WTC11 (cell line): ENCODE measurements at regions of chr21 and their contacts with region 1.

Region 1: DNA sequence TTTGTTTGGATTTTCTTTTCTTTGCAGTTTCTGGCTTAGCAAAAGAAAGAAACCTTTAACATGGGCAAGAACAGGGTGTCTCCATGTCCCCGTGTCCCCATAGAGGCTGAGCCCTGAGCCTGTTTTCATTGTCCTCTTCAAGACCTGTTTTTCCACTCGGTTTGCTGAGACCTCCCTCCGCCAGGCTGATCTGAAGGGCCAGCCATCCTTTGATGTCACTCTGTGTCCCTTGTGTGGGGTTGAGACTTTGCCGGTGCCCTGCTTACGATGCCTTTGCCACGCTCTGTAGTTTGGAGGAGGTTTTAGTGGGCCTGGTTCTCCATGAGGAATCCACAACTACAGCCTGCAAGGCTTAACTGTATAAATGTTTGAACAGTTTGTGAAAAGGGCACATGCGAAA is 23.8 kb downstream of the IFNGR2 start:
- DNase-seq: no peak
- ATAC-seq: no peak
- H3K4me3 Mint-ChIP-seq: no peak overlapping the region
- H3K27ac Mint-ChIP-seq: peak overlapping the region; percentile 37; the same call in 1 of the 2 replicates
- H3K4me1 Mint-ChIP-seq: no peaks in the 10 kb centered on the region
- H3K27me3 Mint-ChIP-seq: no peaks in the 10 kb centered on the region
- CTCF ChIP-seq: no peak

Region 2: GRCh38 chr21:32753818-32754610 is 673.0 kb before region 1 on chr21:
- CTCF ChIA-PET with region 1: no interaction called
- POLR2A ChIA-PET with region 1: no interaction called
- DNase-seq: no peak
- ATAC-seq: no peak
- H3K4me3 Mint-ChIP-seq: no peak overlapping the region
- H3K27ac Mint-ChIP-seq: no peak overlapping the region
- H3K4me1 Mint-ChIP-seq: peaks cover 13% of the 10 kb centered on the region
- H3K27me3 Mint-ChIP-seq: no peaks in the 10 kb centered on the region
- CTCF ChIP-seq: no peak

Region 3: GRCh38 chr21:33229784-33230544 is 197.1 kb before region 1 on chr21 and contains the start of gene IFNAR2:
- CTCF ChIA-PET with region 1: no interaction called
- POLR2A ChIA-PET with region 1: interaction called, 11 read pairs
- DNase-seq: peak; percentile 79
- ATAC-seq: peak; percentile 85
- H3K4me3 Mint-ChIP-seq: peak within 1 kb of the TSS; percentile 81
- H3K27ac Mint-ChIP-seq: 0 out of 2 replicates have a peak within 1 kb of the TSS, but pooled peaks have one; percentile 60
- H3K4me1 Mint-ChIP-seq: peaks cover 38% of the 10 kb centered on the region
- H3K27me3 Mint-ChIP-seq: peaks cover 12% of the 10 kb centered on the region
- CTCF ChIP-seq: no peak
- total RNA-seq, gene IFNAR2: 13.3 to 19.1 TPM (median 16.4 TPM) in 3 replicates

Region 4: GRCh38 chr21:33247599-33247998 is 179.5 kb before region 1 on chr21:
- CTCF ChIA-PET with region 1: no interaction called
- POLR2A ChIA-PET with region 1: no interaction called
- DNase-seq: no peak
- ATAC-seq: no peak
- H3K4me3 Mint-ChIP-seq: no peak overlapping the region
- H3K27ac Mint-ChIP-seq: no peak overlapping the region
- H3K4me1 Mint-ChIP-seq: no peaks in the 10 kb centered on the region
- H3K27me3 Mint-ChIP-seq: no peaks in the 10 kb centered on the region
- CTCF ChIP-seq: no peak